ENCODE measurements at regions of chr10 and their contacts with region 1.

Region 1: GRCh38 chr10:113385021-113385999 is 167.5 kb upstream of the HABP2 start:
- DNase-seq: peak; percentile 21 to 82 (median 47)
- ATAC-seq: peak; percentile 88
- H3K4me3 ChIP-seq: no peak overlapping the region
- H3K4me3 Mint-ChIP-seq: peak overlapping the region; percentile 21
- H3K27ac ChIP-seq: no peak overlapping the region
- H3K27ac Mint-ChIP-seq: peak overlapping the region; percentile 1
- H3K4me1 ChIP-seq: peaks cover 15% of the 10 kb centered on the region
- H3K4me1 Mint-ChIP-seq: peaks cover 26% of the 10 kb centered on the region
- H3K27me3 ChIP-seq: no peaks in the 10 kb centered on the region
- H3K27me3 Mint-ChIP-seq: no peaks in the 10 kb centered on the region
- CTCF ChIP-seq: peak; percentile 62

Region 2: GRCh38 chr10:112471878-112472487 is 913.3 kb before region 1 on chr10:
- CTCF ChIA-PET with region 1: no interaction called
- POLR2A ChIA-PET with region 1: no interaction called
- intact Hi-C with region 1: loop called (anchors 2 kb)
- DNase-seq: peak in 3 of 14 experiments; percentile 52 to 62 (median 60)
- ATAC-seq: peak; percentile 73
- H3K4me3 ChIP-seq: no peak overlapping the region
- H3K4me3 Mint-ChIP-seq: no peak overlapping the region
- H3K27ac ChIP-seq: no peak overlapping the region
- H3K27ac Mint-ChIP-seq: no peak overlapping the region
- H3K4me1 ChIP-seq: peaks cover 2% of the 10 kb centered on the region
- H3K4me1 Mint-ChIP-seq: peaks cover 13% of the 10 kb centered on the region
- H3K27me3 ChIP-seq: no peaks in the 10 kb centered on the region
- H3K27me3 Mint-ChIP-seq: no peaks in the 10 kb centered on the region
- CTCF ChIP-seq: peak; percentile 78

Region 3: DNA sequence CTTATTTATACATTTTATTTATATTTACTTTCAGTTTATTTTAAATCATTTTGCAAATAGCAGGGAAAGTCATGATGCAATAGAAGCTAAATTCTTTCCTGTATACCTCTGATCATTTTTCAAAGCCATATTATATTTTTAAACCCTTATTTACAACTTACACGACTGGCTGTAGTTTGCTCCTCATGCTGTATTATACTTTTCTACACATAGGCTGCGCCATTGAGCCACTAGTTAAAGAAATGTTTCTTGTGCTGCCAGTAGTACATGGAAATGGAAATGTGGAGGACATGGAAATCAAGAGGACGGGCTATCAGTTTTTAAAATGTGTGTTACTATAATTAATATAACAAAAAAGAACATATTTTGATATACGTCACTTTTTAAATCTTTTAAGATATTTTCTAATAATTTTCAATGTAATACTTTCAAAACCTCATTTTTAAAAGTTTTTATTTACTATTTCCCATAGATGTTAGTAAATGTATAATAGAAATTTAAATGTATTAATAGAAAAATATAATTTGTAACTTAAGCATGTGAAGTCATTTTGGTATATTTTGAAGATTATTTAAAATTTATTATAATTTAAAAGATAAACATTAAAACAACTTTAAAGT is 819.8 kb before region 1 on chr10:
- CTCF ChIA-PET with region 1: no interaction called
- POLR2A ChIA-PET with region 1: no interaction called
- intact Hi-C with region 1: loop called in 1 of 2 experiments (anchors 5 kb)
- DNase-seq: peak in 3 of 14 experiments; percentile 31 to 32 (median 31)
- ATAC-seq: no peak
- H3K4me3 ChIP-seq: no peak overlapping the region
- H3K4me3 Mint-ChIP-seq: no peak overlapping the region
- H3K27ac ChIP-seq: no peak overlapping the region
- H3K27ac Mint-ChIP-seq: no peak overlapping the region
- H3K4me1 ChIP-seq: no peaks in the 10 kb centered on the region
- H3K4me1 Mint-ChIP-seq: no peaks in the 10 kb centered on the region
- H3K27me3 ChIP-seq: no peaks in the 10 kb centered on the region
- H3K27me3 Mint-ChIP-seq: no peaks in the 10 kb centered on the region
- CTCF ChIP-seq: no peak

Region 4: DNA sequence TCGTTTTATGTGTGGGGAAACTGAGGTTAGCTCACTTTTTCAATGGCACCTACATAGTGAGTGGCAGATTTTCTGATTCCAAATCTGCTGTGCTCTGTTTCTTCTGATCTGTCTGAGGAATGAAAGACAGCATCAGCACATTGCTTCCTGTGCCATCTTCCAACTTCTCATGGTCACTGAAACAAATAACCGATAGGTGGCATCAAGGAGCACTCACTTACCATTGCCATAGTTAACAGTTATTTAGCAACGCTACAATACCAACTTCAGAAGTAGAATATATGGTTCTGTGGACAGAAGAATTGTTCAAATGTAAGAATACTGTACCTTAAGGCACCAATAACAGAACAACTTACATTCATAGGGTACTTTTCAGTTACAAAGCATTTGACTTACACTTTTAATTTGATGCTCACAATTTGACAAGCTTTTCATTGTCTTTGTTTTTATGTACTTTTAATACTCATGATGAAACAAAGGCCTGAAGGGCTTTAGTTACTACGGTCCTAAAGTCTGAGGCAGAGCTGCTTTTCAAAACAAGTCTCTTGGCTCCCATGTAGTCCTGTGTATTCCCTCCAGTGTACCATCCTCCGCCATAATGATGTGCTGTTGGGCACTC is 664.1 kb before region 1 on chr10:
- CTCF ChIA-PET with region 1: interaction called, 5 read pairs
- POLR2A ChIA-PET with region 1: no interaction called
- intact Hi-C with region 1: loop called (anchors 1 to 2 kb)
- DNase-seq: peak in 3 of 14 experiments; percentile 40 to 54 (median 51)
- ATAC-seq: no peak
- H3K4me3 ChIP-seq: no peak overlapping the region
- H3K4me3 Mint-ChIP-seq: no peak overlapping the region
- H3K27ac ChIP-seq: no peak overlapping the region
- H3K27ac Mint-ChIP-seq: no peak overlapping the region
- H3K4me1 ChIP-seq: no peaks in the 10 kb centered on the region
- H3K4me1 Mint-ChIP-seq: no peaks in the 10 kb centered on the region
- H3K27me3 ChIP-seq: no peaks in the 10 kb centered on the region
- H3K27me3 Mint-ChIP-seq: no peaks in the 10 kb centered on the region
- CTCF ChIP-seq: peak; percentile 63

Region 5: DNA sequence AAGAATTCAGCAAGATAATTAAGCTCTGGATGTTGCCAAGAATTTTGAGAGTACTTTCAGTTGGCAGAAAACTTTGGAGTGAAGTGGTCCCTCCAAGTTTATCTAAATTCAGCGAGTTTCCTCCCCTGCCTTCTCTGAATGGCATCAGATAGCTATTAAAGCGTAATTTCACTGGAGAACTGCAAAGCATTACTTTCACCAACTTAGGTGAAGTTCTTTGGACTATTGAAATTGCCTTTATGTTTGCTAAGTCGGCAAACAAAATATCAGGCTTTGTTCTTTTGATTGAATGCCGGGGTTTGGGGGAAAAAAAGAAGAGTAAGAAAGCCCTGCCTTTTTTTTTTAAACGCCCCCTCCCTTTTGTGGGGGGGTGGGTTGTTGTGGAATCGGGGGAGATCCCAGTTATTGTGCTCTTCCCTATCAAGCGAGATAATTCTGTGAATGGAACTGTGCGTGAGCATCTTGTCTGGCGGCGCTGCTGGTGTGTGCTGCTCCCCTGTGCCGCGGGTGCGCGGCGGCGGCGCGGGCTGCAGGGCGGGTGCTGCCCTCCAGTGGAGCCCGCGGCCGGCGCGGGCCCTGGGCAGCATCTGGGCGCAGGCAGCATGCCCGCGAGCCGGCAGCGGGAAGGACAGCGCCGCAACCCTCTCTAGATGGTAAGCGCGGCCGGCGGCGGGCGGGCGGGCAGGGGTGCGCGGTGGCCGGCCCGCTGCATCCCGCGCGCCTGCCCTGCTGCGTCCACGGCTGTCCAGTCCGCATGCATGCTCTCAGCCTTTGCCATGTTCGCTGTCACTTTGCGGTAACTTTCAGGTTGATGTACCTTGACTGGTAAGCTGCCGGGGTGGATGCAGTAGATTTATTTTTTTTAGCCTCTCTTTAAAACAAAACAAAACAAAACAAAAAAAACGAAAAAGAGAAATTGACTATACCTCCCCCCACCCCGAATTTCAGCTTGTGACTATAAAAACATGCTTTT is 258.8 kb before region 1 on chr10:
- CTCF ChIA-PET with region 1: no interaction called
- POLR2A ChIA-PET with region 1: no interaction called
- intact Hi-C with region 1: loop called in 1 of 2 experiments (anchors 10 kb)
- DNase-seq: peak in 13 of 14 experiments; percentile 5 to 73 (median 24)
- ATAC-seq: peak; percentile 80
- H3K4me3 ChIP-seq: no peak overlapping the region
- H3K4me3 Mint-ChIP-seq: peak overlapping the region; percentile 26
- H3K27ac ChIP-seq: no peak overlapping the region
- H3K27ac Mint-ChIP-seq: no peak overlapping the region
- H3K4me1 ChIP-seq: no peaks in the 10 kb centered on the region
- H3K4me1 Mint-ChIP-seq: peaks cover 4% of the 10 kb centered on the region
- H3K27me3 ChIP-seq: peaks cover 8 to 25% of the 10 kb centered on the region in 2 experiments
- H3K27me3 Mint-ChIP-seq: peaks cover 67% of the 10 kb centered on the region
- CTCF ChIP-seq: no peak

Region 6: GRCh38 chr10:113340282-113340681 is 45.0 kb before region 1 on chr10:
- CTCF ChIA-PET with region 1: no interaction called
- POLR2A ChIA-PET with region 1: no interaction called
- intact Hi-C with region 1: loop called in 1 of 2 experiments (anchors 5 kb)
- DNase-seq: no peak
- ATAC-seq: no peak
- H3K4me3 ChIP-seq: no peak overlapping the region
- H3K4me3 Mint-ChIP-seq: no peak overlapping the region
- H3K27ac ChIP-seq: no peak overlapping the region
- H3K27ac Mint-ChIP-seq: no peak overlapping the region
- H3K4me1 ChIP-seq: no peaks in the 10 kb centered on the region
- H3K4me1 Mint-ChIP-seq: no peaks in the 10 kb centered on the region
- H3K27me3 ChIP-seq: no peaks in the 10 kb centered on the region
- H3K27me3 Mint-ChIP-seq: no peaks in the 10 kb centered on the region
- CTCF ChIP-seq: no peak

Region 7: DNA sequence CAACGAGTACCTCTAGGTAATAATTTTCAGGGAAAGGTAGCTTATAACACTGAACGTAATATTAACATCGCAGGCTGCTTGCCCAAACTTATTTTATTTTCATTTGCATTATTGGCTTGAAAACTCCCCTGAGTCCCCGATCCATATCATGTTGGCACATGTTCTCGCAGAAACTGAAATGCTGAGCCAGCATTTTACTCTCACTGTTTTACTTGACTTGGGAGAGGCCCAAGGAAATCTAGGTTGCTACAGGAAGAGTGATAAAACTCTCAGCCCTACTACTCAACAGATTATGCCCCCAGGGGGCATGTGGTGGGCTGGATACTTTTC is 16.0 kb before region 1 on chr10:
- CTCF ChIA-PET with region 1: no interaction called
- POLR2A ChIA-PET with region 1: no interaction called
- intact Hi-C with region 1: no loop called
- DNase-seq: no peak
- ATAC-seq: no peak
- H3K4me3 ChIP-seq: no peak overlapping the region
- H3K4me3 Mint-ChIP-seq: no peak overlapping the region
- H3K27ac ChIP-seq: no peak overlapping the region
- H3K27ac Mint-ChIP-seq: no peak overlapping the region
- H3K4me1 ChIP-seq: no peaks in the 10 kb centered on the region
- H3K4me1 Mint-ChIP-seq: no peaks in the 10 kb centered on the region
- H3K27me3 ChIP-seq: no peaks in the 10 kb centered on the region
- H3K27me3 Mint-ChIP-seq: no peaks in the 10 kb centered on the region
- CTCF ChIP-seq: no peak

Measured in CD4-positive, alpha-beta T cell (primary cell).